A549 (cell line): ENCODE measurements at regions of chr17 and their contacts with region 1.

Region 1: GRCh38 chr17:27805520-27806146 is 5.3 kb upstream of the NOS2 start:
- DNase-seq: peak; percentile 92 to 93
- ATAC-seq: peak; percentile 95 to 99
- H3K4me3 ChIP-seq: peak overlapping the region; percentile 28
- H3K27ac ChIP-seq: peak overlapping the region; percentile 73 to 86
- H3K4me1 ChIP-seq: peaks cover 3% of the 10 kb centered on the region; the same call in 1 of the 3 replicates
- CTCF ChIP-seq: peak; percentile 86
- EP300 ChIP-seq: no peak
- POLR2A ChIP-seq: no peak
- RAD21 ChIP-seq: peak; percentile 80 to 84

Region 2: DNA sequence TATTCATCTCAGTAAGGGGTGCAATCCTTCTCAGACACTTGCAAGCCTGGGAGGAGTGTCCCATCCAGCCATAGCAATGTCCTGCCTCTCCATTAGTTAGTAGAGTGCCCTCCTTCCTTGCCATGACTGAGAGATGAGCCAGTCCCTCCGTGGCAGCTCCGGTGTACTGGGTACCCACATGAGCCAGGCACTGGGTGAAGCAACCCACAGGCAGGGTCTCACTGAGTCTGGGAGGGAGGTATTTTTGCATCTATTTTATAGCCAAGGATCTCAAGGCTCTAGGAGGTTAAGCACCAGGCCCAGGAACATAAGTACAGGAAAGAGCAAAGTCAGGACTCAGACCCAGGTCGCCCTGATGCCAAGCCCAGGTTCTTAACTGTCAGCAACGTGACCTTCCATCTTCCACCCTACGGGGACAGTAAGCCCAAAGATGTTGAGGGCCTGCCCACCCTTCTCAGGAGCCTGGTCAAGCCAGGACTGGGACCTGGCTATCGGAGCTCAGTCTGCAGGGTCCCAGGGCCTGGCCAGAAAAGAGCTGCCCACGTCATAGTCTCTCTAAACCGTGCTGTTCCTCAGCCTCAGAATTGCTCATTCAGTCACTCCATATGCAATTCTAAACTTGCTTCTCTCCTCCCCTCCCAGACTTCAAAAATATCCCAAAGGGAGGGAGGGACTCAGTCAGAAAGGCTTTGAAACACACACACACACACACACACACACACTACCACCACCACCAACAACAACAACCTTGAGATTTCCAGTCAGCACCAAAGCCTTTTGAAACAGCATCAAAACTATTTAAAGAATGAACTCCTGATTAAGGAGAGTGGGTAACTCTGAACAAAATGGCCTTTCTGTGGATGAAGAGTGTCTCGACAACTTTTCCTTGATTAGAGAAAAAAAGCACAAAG is 21.9 kb before region 1 on chr17:
- CTCF ChIA-PET with region 1: interaction called, 24 read pairs
- POLR2A ChIA-PET with region 1: no interaction called
- DNase-seq: no peak
- ATAC-seq: no peak; a peak in 1 of 6 replicates
- H3K4me3 ChIP-seq: no peak overlapping the region
- H3K27ac ChIP-seq: no peak overlapping the region
- H3K4me1 ChIP-seq: peaks cover under 1% of the 10 kb centered on the region; the same call in 1 of the 3 replicates
- CTCF ChIP-seq: no peak
- EP300 ChIP-seq: no peak
- POLR2A ChIP-seq: no peak
- RAD21 ChIP-seq: no peak

Region 3: DNA sequence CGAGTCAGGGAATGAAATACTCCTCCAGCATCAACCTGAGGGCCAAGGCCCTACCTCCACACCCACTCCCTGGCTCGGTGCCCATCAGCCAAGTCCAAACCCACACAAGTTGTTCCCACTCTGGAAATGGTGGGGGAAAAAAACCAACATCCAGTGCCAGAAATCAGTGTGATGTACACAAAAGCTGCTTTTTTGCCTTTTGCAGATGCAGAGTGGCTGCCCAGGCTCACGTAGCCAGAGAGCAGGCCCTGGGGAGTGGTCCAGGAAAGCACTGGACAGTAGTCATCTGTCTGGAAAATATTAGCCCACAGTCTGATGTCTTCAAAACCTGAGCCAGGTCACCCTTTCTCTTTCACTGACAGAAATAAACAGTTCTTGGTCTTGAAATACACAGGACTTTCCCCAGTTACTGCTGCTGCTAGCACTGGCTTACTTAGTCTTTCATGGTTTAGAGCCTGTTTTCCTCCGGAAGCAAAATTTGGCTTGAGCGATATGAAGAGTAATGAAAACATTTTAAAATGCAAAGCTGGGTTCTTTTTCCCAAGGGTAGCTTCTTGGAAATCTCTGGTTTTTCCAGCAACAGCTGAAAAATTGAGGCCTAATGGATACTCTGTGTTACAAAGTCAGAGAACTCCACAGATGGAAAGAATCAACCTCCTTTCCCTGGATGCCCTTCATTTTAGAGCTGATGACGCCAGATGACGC is 12.9 kb after region 1 on chr17:
- CTCF ChIA-PET with region 1: interaction called, 42 read pairs
- POLR2A ChIA-PET with region 1: interaction called, 3 read pairs
- DNase-seq: no peak
- ATAC-seq: no peak
- H3K4me3 ChIP-seq: no peak overlapping the region
- H3K27ac ChIP-seq: no peak overlapping the region
- H3K4me1 ChIP-seq: no peaks in the 10 kb centered on the region
- CTCF ChIP-seq: no peak
- EP300 ChIP-seq: no peak
- POLR2A ChIP-seq: no peak
- RAD21 ChIP-seq: no peak

Region 4: GRCh38 chr17:27834571-27834970 is 28.9 kb after region 1 on chr17:
- CTCF ChIA-PET with region 1: interaction called, 23 read pairs
- POLR2A ChIA-PET with region 1: no interaction called
- DNase-seq: no peak
- ATAC-seq: no peak
- H3K4me3 ChIP-seq: no peak overlapping the region
- H3K27ac ChIP-seq: no peak overlapping the region
- H3K4me1 ChIP-seq: no peaks in the 10 kb centered on the region
- CTCF ChIP-seq: no peak
- EP300 ChIP-seq: no peak
- POLR2A ChIP-seq: no peak
- RAD21 ChIP-seq: no peak

Region 5: GRCh38 chr17:27868576-27868975 is 62.9 kb after region 1 on chr17:
- CTCF ChIA-PET with region 1: interaction called, 474 read pairs
- POLR2A ChIA-PET with region 1: no interaction called
- DNase-seq: no peak
- ATAC-seq: no peak
- H3K4me3 ChIP-seq: no peak overlapping the region
- H3K27ac ChIP-seq: no peak overlapping the region
- H3K4me1 ChIP-seq: no peaks in the 10 kb centered on the region
- CTCF ChIP-seq: no peak
- EP300 ChIP-seq: no peak
- POLR2A ChIP-seq: no peak
- RAD21 ChIP-seq: no peak